GM12878 (cell line): ENCODE measurements at regions of chr6 and their contacts with region 1.

Region 1: DNA sequence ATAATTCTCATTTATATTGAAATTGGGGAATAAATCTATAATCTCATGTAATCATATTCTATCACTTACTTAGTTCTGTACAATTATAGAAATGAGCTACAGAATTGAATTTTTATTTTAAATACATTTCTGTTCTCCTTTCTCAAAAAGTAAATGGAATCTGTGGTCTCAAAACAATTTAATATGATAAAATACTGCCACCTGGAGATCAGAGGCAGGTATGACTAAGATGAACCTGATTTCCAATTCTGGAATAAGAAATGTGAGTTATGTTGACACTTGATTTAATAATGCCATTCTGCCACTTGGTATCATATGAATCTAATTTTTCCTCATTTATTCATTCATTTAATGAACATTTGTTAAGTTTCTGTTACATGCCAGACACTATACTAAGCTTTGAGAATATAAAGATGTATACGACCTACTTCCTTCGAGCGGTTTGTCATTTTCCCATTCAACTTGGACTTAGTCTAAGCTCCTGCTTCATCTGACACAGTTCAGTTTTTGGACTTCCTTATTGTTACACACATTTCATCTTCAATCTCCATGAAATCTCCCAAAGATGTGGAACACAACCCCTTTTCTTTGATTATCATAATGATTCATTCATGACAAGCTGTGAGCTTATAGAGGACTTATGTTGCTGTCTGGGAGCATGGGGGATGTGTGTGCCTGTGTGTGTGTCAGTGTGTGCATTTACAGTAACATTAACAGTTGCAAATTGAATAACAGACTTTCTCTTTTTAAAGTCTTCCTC is 7.5 kb upstream of the CCDC28A start:
- DNase-seq: no peak
- ATAC-seq: 0 out of 3 replicates have a peak, but pooled peaks have one; percentile 17
- H3K4me3 ChIP-seq: no peak overlapping the region
- H3K27ac ChIP-seq: no peak overlapping the region
- H3K4me1 ChIP-seq: peaks cover 12% of the 10 kb centered on the region
- H3K27me3 ChIP-seq: no peaks in the 10 kb centered on the region
- CTCF ChIP-seq: peak; percentile 39 to 64 (median 50); a peak in 5 of 6 replicates
- EP300 ChIP-seq: no peak
- POLR2A ChIP-seq: no peak
- RAD21 ChIP-seq: peak; percentile 78

Region 2: DNA sequence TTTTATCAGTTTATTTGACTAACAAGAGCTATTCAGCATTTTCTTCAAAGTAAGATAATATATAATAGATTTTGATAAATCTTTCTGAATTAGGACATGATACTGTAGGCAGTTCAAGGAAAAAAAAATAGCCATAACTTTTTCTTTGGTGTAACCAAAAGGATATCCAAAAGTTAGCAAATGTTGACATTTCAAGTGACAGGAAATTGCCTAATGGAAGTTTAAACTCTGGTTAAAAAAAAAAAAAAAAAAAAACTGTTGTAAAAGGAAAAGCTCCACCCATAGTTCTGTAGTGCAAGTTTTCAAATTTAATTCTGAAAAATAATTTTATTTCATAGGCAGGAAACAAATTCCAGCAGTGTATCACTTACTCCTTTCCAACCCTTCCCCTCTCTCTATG is 343.2 kb before region 1 on chr6:
- CTCF ChIA-PET with region 1: interaction called, 11 read pairs
- POLR2A ChIA-PET with region 1: no interaction called
- RAD21 ChIA-PET with region 1: no interaction called
- SMC1A ChIA-PET with region 1: interaction called, 3 read pairs
- in situ Hi-C with region 1: no loop called
- intact Hi-C with region 1: loop called (anchors 5 kb)
- DNase-seq: no peak
- ATAC-seq: no peak
- H3K4me3 ChIP-seq: no peak overlapping the region
- H3K27ac ChIP-seq: no peak overlapping the region
- H3K4me1 ChIP-seq: no peaks in the 10 kb centered on the region
- H3K27me3 ChIP-seq: no peaks in the 10 kb centered on the region
- CTCF ChIP-seq: no peak
- EP300 ChIP-seq: no peak
- POLR2A ChIP-seq: no peak
- RAD21 ChIP-seq: no peak

Region 3: DNA sequence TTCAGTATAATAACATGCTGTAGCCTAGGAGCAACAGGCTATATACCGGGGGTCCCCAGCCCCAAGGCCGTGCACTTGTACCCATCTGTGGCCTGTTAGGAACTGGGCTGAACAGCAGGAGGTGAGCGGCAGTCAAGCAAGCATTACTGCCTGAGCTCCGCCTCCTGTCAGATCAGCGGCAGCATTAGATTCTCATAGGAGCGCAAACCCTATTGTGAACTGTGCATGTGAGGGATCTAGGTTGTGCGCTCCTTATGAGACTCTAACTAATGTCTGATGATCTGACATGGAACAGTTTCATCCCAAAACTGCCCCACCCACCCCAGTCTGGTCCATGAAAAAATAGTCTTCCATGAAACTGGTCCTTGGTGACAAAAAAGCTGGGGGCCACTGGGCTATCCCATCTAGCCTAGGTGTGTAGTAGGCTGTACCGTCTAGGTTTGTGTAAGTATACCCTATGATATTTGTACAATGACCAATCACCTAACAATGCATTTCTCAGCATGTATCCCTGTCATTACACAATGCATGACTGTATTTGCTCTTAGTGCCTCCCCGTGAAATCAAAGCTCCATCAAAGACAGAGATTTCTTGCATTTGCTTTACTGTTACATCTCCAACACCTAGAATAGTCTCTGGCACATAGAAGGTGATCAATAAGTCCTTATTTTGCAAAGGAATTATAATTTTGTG is 297.6 kb before region 1 on chr6:
- CTCF ChIA-PET with region 1: no interaction called
- POLR2A ChIA-PET with region 1: no interaction called
- RAD21 ChIA-PET with region 1: no interaction called
- SMC1A ChIA-PET with region 1: no interaction called
- in situ Hi-C with region 1: no loop called
- intact Hi-C with region 1: no loop called
- DNase-seq: no peak
- ATAC-seq: no peak
- H3K4me3 ChIP-seq: no peak overlapping the region
- H3K27ac ChIP-seq: no peak overlapping the region
- H3K4me1 ChIP-seq: no peaks in the 10 kb centered on the region
- H3K27me3 ChIP-seq: no peaks in the 10 kb centered on the region
- CTCF ChIP-seq: no peak
- EP300 ChIP-seq: no peak
- POLR2A ChIP-seq: no peak
- RAD21 ChIP-seq: no peak

Region 4: DNA sequence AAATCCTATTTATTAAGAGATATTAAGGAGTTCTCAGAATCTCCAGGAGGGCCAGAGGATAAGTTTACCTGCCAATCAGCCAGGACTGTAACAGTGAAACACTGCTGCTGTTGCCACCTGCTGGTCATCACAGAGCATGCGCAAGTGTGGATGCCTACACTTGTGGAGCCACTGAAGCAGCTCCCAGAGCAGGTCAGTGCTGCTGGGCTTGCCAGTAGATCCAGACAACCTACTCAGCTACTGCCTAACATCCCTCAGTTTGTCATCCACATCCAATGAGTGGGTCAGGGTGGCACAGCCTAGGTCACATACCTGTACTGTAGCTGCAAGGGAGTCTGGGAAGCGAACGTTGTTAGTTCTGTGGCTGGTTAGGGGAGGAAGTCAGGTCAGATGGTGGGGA is 248.4 kb before region 1 on chr6:
- CTCF ChIA-PET with region 1: interaction called, 35 read pairs
- POLR2A ChIA-PET with region 1: no interaction called
- RAD21 ChIA-PET with region 1: no interaction called
- SMC1A ChIA-PET with region 1: interaction called, 4 read pairs
- in situ Hi-C with region 1: no loop called
- intact Hi-C with region 1: loop called (anchors 10 kb)
- DNase-seq: no peak
- ATAC-seq: peak; percentile 77
- H3K4me3 ChIP-seq: no peak overlapping the region
- H3K27ac ChIP-seq: no peak overlapping the region
- H3K4me1 ChIP-seq: no peaks in the 10 kb centered on the region; the same call in 1 of the 2 replicates
- H3K27me3 ChIP-seq: 0 out of 4 replicates have a peak, but pooled peaks cover 0 to 2% of the 10 kb centered on the region in 2 experiments
- CTCF ChIP-seq: peak; percentile 47 to 80 (median 75)
- EP300 ChIP-seq: no peak
- POLR2A ChIP-seq: no peak
- RAD21 ChIP-seq: peak; percentile 63

Region 5: GRCh38 chr6:138600726-138601125 is 165.3 kb before region 1 on chr6:
- CTCF ChIA-PET with region 1: interaction called, 33 read pairs
- POLR2A ChIA-PET with region 1: no interaction called
- RAD21 ChIA-PET with region 1: interaction called, 3 read pairs
- SMC1A ChIA-PET with region 1: interaction called, 19 read pairs
- in situ Hi-C with region 1: no loop called
- intact Hi-C with region 1: no loop called
- DNase-seq: no peak
- ATAC-seq: no peak
- H3K4me3 ChIP-seq: no peak overlapping the region
- H3K27ac ChIP-seq: no peak overlapping the region
- H3K4me1 ChIP-seq: no peaks in the 10 kb centered on the region
- H3K27me3 ChIP-seq: no peaks in the 10 kb centered on the region
- CTCF ChIP-seq: no peak
- EP300 ChIP-seq: no peak
- POLR2A ChIP-seq: no peak
- RAD21 ChIP-seq: no peak

Region 6: DNA sequence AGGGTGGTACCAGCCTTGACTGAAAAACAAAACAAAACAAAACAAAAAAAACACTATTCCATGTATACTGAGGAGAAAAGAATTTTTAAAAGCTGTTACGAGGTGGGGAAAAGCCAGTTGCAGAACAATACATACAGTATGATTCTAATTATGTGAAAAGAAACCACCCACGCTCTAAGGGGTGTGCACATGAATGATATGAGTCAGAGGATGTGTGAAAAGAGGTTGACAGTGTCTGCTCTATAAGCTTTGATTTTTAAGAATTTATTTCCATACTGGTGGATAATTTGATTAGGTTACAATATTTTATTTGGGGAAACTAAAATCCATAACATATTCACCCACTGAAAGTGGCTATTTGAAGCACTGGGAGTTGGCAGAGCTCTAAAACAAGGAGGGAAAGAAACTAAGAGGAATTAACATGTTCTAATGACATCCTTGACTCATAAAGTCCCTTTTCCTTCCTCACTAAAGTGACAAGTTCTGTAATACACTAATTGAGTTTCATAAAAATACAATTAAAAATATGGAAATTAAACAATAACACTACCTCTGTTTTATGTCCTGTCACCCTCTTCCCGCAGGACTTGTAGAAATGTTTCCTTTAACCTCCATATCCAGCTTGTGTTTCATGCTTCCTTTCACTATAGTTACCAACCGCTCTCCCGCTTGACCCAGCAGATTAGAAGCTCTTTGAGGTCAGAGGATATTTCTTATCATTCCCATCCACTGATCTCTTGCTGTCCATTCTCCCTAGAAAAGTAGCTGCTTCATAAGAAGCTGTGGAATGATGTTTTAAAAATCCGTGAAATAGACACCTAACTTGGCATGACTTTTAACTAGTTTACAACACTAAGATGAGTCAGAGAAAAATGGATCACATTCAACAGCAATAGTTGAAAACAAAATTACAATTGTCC is 111.1 kb before region 1 on chr6:
- CTCF ChIA-PET with region 1: interaction called, 3 read pairs
- POLR2A ChIA-PET with region 1: no interaction called
- RAD21 ChIA-PET with region 1: interaction called, 4 read pairs
- SMC1A ChIA-PET with region 1: interaction called, 13 read pairs
- in situ Hi-C with region 1: no loop called
- intact Hi-C with region 1: no loop called
- DNase-seq: peak; percentile 50
- ATAC-seq: peak; percentile 98
- H3K4me3 ChIP-seq: no peak overlapping the region
- H3K27ac ChIP-seq: no peak overlapping the region
- H3K4me1 ChIP-seq: peaks cover 9% of the 10 kb centered on the region
- H3K27me3 ChIP-seq: no peaks in the 10 kb centered on the region
- CTCF ChIP-seq: no peak
- EP300 ChIP-seq: peak; percentile 71 to 95; a peak in 3 of 4 replicates
- POLR2A ChIP-seq: no peak
- RAD21 ChIP-seq: no peak

Region 7: DNA sequence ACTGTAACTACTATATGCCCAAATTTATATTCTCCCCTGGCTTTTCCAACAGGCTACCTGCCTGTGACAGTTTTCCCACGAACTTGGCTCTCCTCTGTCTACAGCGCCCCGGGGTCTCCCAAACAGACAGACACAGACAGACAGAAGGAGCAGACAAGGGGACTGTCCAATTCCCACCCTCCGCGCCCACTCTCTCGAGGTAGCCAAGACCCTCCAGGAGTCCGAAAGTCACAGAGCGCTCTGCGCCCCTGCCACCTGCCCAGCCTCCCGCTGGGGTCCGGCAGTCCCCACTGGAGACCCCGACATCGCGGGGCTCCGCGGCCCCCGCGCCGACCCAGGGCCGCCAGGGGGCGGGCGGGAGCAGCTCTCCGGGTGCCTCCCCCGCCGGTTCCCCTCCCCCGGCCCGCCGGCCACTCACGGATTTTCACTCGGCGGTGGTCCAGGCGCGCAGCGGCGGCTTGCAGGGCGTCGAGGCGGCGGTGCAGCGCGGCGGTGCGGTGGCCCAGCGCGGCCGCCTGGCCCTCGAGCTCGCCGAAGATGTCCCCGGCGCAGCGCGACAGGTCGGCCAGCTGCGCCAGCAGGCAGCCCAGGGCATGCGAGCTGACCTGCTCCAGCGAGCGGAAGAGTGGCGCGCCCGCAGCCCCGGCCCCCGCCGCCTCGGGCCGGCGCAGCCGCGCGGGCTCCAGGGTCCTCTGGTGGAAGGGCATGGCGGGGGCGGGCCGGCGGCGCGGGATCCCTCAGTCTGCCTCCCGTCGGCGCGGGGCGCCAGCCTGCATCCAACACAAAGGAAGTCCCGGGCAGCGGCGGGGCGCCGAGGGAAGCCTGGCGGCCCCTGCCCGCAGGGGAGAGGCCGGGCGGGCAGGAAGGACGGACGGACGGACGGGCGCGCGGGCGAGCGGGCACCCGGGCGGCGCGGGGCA is 73.8 kb before region 1 on chr6:
- CTCF ChIA-PET with region 1: interaction called, 68 read pairs
- POLR2A ChIA-PET with region 1: interaction called, 9 read pairs
- RAD21 ChIA-PET with region 1: interaction called, 40 read pairs
- SMC1A ChIA-PET with region 1: interaction called, 57 read pairs
- in situ Hi-C with region 1: no loop called
- intact Hi-C with region 1: loop called (anchors 2 kb)
- DNase-seq: no peak
- ATAC-seq: peak; percentile 74
- H3K4me3 ChIP-seq: peak overlapping the region; percentile 71
- H3K27ac ChIP-seq: no peak overlapping the region
- H3K4me1 ChIP-seq: no peaks in the 10 kb centered on the region
- H3K27me3 ChIP-seq: no peaks in the 10 kb centered on the region
- CTCF ChIP-seq: peak; percentile 58 to 74 (median 72); a peak in 5 of 6 replicates
- EP300 ChIP-seq: no peak
- POLR2A ChIP-seq: no peak
- RAD21 ChIP-seq: peak; percentile 37; the same call in 1 of the 2 replicates

Region 8: DNA sequence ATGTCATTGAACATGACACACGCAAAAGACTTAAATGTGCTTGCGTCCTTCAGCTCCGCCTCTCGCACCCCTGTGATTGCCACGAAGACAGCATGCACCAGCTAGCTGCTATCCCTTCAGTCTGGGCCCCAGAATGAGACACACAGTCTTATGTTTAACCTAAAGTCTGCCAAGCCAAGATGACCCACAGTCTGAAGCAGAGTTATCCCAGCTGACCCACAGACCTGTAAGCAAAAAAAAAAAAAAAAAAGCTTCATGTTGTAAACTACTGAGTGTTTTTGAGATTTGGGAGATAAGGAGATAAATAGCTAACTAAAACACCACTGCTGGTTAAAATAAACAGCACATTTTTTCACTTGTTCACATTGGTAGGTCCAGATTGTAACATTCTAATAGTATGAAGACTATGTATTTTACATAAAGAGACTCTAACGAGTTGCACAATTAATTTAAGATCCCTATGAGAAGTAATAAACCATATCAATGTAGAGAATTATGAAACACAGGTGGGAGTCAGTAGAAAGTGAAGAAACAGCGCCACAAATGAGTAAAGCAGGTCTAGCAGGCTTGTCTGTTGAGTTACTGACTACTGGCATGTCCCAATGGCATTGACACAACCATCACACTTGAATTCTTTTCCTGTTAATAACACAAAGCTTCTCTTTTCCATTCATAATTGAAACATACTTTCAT is 39.9 kb before region 1 on chr6:
- CTCF ChIA-PET with region 1: interaction called, 14 read pairs
- POLR2A ChIA-PET with region 1: interaction called, 4 read pairs
- RAD21 ChIA-PET with region 1: interaction called, 11 read pairs
- SMC1A ChIA-PET with region 1: interaction called, 5 read pairs
- in situ Hi-C with region 1: no loop called
- intact Hi-C with region 1: no loop called
- DNase-seq: no peak
- ATAC-seq: no peak
- H3K4me3 ChIP-seq: no peak overlapping the region
- H3K27ac ChIP-seq: no peak overlapping the region
- H3K4me1 ChIP-seq: no peaks in the 10 kb centered on the region
- H3K27me3 ChIP-seq: no peaks in the 10 kb centered on the region
- CTCF ChIP-seq: no peak
- EP300 ChIP-seq: no peak
- POLR2A ChIP-seq: no peak
- RAD21 ChIP-seq: no peak

Region 9: DNA sequence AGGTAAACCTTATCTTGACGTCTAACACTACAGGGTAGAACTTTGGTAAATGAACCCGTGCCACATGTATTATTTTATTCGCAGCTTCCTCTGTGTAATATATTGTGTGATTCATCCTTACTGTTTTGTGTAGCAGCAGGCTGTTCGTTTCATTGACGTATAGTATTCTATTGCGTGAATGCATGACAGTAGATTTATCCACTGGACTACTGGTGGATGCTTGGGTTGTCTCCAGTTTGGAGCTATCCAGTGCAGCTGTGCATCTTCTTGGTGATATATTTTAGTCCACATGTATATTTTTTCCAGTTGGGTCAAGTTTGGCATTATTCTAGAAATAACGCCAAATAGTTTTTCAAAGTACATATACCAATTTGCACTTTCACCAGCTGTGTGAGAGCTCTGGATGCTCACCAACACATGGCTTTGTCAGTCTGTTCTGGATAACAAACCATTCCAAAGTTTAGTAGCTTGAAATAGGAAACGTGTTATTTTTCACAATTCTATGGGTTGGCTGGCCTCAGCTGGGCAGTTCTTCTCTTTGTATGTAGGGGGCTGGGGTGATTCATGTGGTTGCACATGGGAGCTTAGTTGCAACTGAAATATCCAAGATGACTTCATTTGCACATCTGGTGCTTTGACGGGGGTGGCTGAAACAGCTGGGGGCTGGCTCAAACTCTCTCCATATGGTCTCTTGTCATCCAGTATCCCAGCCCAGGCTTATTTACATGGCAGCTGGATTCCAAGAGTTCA is 39.1 kb after region 1 on chr6:
- CTCF ChIA-PET with region 1: no interaction called
- POLR2A ChIA-PET with region 1: no interaction called
- RAD21 ChIA-PET with region 1: no interaction called
- SMC1A ChIA-PET with region 1: no interaction called
- in situ Hi-C with region 1: no loop called
- intact Hi-C with region 1: no loop called
- DNase-seq: no peak
- ATAC-seq: no peak
- H3K4me3 ChIP-seq: no peak overlapping the region
- H3K27ac ChIP-seq: no peak overlapping the region
- H3K4me1 ChIP-seq: no peaks in the 10 kb centered on the region
- H3K27me3 ChIP-seq: no peaks in the 10 kb centered on the region; a peak in 1 of 4 replicates
- CTCF ChIP-seq: no peak
- EP300 ChIP-seq: no peak
- POLR2A ChIP-seq: no peak
- RAD21 ChIP-seq: no peak